A673 (cell line): ENCODE measurements at regions of chr11 and their contacts with region 1.

Region 1: DNA sequence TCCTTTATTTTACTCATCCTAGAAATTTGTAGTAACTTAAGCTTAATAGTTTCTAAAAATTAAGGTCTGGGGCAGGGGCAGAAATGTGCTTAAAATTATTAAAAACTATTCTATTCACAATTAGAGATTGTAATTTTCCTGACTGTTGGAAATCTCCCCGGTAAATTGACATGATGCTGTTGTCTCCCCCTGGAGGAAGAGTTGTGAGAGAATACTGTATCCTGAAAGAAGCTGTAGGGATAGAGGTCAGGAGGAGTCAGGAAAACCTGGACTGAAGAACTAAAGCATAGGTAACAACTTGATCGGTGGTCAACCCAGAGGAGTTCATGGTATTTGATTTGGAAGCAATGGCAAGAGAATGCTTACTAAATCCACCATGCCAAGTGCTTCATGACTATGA is 16.2 kb upstream of the ESAM start:
- DNase-seq: no peak
- H3K4me3 ChIP-seq: no peak overlapping the region
- H3K27ac ChIP-seq: no peak overlapping the region
- H3K4me1 ChIP-seq: peaks cover 14% of the 10 kb centered on the region
- H3K27me3 ChIP-seq: no peaks in the 10 kb centered on the region
- CTCF ChIP-seq: peak; percentile 49

Region 2: GRCh38 chr11:124758317-124759203 is 19.7 kb before region 1 on chr11:
- CTCF ChIA-PET with region 1: interaction called, 19 read pairs
- POLR2A ChIA-PET with region 1: no interaction called
- intact Hi-C with region 1: no loop called
- DNase-seq: peak; percentile 88
- H3K4me3 ChIP-seq: peak overlapping the region; percentile 37
- H3K27ac ChIP-seq: no peak overlapping the region
- H3K4me1 ChIP-seq: peaks cover 10% of the 10 kb centered on the region
- H3K27me3 ChIP-seq: no peaks in the 10 kb centered on the region
- CTCF ChIP-seq: peak; percentile 94

Region 3: DNA sequence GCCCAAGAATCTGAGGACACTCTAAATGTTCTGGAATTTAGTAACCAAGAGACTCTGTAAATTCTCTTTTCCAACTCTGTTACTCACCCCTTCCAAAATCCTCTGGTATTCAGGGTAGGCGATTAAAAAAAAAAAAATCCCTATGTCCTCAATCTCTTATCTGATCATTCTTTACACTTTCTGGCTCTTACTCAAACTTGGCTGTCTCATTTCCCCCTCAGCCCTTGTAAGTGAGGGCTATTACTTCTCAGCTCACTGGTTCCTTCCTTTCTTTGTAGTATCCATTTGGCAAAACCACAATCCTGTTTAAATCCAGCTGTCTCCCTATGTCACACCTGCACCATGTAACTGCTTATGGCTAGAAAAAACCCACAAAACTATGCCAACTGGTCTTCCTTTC is 34.6 kb after region 1 on chr11:
- CTCF ChIA-PET with region 1: interaction called, 10 read pairs
- POLR2A ChIA-PET with region 1: no interaction called
- intact Hi-C with region 1: no loop called
- DNase-seq: peak; percentile 29
- H3K4me3 ChIP-seq: no peak overlapping the region
- H3K27ac ChIP-seq: no peak overlapping the region
- H3K4me1 ChIP-seq: no peaks in the 10 kb centered on the region
- H3K27me3 ChIP-seq: no peaks in the 10 kb centered on the region
- CTCF ChIP-seq: no peak

Region 4: GRCh38 chr11:125049164-125049792 is 271.0 kb after region 1 on chr11:
- CTCF ChIA-PET with region 1: no interaction called
- POLR2A ChIA-PET with region 1: no interaction called
- intact Hi-C with region 1: no loop called
- DNase-seq: no peak
- H3K4me3 ChIP-seq: no peak overlapping the region
- H3K27ac ChIP-seq: no peak overlapping the region
- H3K4me1 ChIP-seq: no peaks in the 10 kb centered on the region
- H3K27me3 ChIP-seq: no peaks in the 10 kb centered on the region
- CTCF ChIP-seq: no peak